GM12878 (cell line): ENCODE measurements at regions of chr6 and their contacts with region 1.

Region 1: DNA sequence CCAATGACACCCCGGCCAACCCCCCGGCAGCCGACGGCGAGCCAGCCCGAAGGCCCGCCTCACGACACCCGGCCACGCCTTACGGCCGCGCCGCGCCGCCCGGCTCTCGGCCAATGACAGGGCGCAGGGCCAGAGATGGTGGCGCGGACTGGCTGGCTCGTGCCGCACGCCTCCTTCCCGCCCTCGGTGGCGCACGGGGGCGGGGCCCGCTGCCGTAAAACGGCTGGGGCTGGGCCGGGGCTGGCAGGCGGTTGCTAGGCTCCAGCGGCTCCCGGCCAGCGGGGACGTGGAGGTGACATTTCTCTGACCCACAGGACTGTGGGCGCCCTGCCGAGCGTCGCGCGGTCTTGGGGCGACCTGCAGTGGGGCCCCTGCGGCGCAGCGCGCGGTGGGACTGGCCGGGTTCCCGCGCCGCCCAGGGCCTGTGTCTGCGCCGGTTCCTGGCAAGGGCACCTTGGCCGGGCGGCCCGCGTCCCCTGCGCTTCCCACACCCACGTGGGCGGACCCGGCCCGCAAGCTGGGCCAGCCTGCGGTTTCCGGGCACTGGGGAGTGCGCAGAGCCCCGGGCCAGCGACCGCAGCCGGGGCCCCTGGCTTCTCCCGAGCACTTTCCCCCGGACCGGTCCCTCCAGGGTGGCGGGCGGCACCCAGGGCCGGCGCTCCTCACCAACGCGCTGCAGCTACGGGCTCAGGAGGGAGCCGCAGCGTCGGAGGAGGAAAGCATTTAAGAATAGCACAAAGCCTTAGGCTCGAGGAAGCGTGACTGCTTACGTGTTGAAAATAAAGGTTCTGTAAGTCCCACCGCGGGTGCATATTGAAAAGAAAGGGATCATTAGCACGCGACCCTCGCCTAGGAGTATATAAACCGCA is at the start of gene MPC1:
- DNase-seq: peak; percentile 81
- ATAC-seq: peak; percentile 94
- H3K4me3 ChIP-seq: peak within 1 kb of the TSS; percentile 88
- H3K27ac ChIP-seq: peak within 1 kb of the TSS; percentile 81
- H3K4me1 ChIP-seq: peaks cover 5% of the 10 kb centered on the region
- H3K27me3 ChIP-seq: no peaks in the 10 kb centered on the region
- CTCF ChIP-seq: 0 out of 6 replicates have a peak, but pooled peaks of 1 of the 3 experiments have one; percentile 0
- EP300 ChIP-seq: no peak
- POLR2A ChIP-seq: peak; percentile 88
- RAD21 ChIP-seq: no peak
- polyA plus RNA-seq, gene MPC1: 81.5 to 97.0 TPM

Region 2: DNA sequence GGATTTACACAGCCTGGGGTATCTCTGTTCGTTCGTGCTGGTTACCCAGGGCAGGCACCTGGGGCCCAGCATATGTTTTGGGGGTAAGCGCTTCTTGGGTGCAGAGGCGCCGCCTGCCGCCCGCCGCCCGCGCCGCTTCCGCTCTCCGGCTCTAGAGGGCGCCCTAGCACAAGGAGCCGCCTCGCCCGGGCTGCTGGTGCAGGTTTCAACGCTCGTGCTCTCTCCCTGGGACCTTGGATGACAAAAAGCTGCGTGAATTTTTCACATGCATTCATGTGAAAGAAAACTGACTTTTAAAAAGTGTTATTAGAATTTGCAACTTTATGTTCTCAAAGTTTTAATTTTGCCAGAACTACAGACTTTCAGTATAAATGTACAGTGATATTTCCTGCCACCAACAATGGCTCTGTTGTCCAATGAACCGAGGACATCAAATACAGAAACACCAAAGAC is 107.4 kb before region 1 on chr6:
- CTCF ChIA-PET with region 1: interaction called, 39 read pairs
- POLR2A ChIA-PET with region 1: no interaction called
- RAD21 ChIA-PET with region 1: interaction called, 24 read pairs
- SMC1A ChIA-PET with region 1: interaction called, 17 read pairs
- in situ Hi-C with region 1: loop called (anchors 5 kb)
- intact Hi-C with region 1: loop called (anchors 1 kb)
- DNase-seq: no peak
- ATAC-seq: peak; percentile 93
- H3K4me3 ChIP-seq: no peak overlapping the region
- H3K27ac ChIP-seq: no peak overlapping the region
- H3K4me1 ChIP-seq: peaks cover 28% of the 10 kb centered on the region
- H3K27me3 ChIP-seq: no peaks in the 10 kb centered on the region; a peak in 1 of 4 replicates
- CTCF ChIP-seq: peak; percentile 99 to 100 (median 100); a peak in 5 of 6 replicates
- EP300 ChIP-seq: no peak
- POLR2A ChIP-seq: no peak
- RAD21 ChIP-seq: peak; percentile 99

Region 3: DNA sequence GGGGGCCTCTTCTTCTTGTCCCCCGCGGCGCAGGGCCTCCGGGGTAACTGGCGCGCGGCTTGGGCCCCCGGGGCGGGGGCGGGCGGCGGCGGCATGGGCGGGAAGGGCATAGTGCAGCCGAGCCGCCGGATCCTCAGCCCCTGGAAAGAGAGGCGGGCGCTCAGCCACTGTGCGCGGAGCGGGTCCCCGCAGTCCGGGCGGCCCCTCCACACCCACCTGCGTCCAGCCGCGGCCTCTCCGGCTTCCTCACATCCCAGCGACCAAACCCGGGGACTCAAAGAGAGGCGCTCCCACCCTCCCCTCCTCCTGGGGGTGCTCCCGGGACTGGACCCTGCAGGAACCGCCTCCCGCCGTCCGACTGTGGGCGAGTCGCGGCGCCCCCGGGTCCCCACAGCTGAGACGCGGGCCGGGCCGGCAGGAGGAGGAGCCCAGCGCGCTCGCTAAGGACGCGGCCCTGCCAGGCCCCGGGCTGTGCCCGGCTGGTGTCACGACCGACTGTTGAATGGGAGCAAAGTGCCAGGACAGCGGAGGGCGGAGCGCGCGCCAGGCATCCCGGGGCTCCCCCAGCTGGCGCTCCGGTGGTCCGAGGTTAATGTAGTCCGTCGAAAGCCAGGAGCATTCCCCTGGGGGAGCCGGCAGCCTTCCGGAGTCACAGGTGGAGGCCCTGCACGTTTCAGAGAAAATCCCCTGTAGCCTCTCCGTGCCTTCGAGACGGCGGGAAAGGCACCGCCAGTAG is 75.0 kb before region 1 on chr6 and contains the start of gene PRR18:
- CTCF ChIA-PET with region 1: interaction called, 211 read pairs
- POLR2A ChIA-PET with region 1: interaction called, 13 read pairs
- RAD21 ChIA-PET with region 1: interaction called, 73 read pairs
- SMC1A ChIA-PET with region 1: interaction called, 79 read pairs
- in situ Hi-C with region 1: no loop called
- intact Hi-C with region 1: loop called (anchors 1 kb)
- DNase-seq: peak; percentile 42
- ATAC-seq: peak; percentile 77
- H3K4me3 ChIP-seq: peak within 1 kb of the TSS; percentile 67
- H3K27ac ChIP-seq: peak within 1 kb of the TSS; percentile 48; the same call in 1 of the 2 replicates
- H3K4me1 ChIP-seq: no peaks in the 10 kb centered on the region
- H3K27me3 ChIP-seq: no peaks in the 10 kb centered on the region; a peak in 2 of 4 replicates
- CTCF ChIP-seq: no peak
- EP300 ChIP-seq: no peak
- POLR2A ChIP-seq: peak; percentile 52; the same call in 1 of the 2 replicates
- RAD21 ChIP-seq: no peak
- polyA plus RNA-seq, gene PRR18: 0.26 to 0.84 TPM

Region 4: GRCh38 chr6:166318649-166319600 is 64.2 kb before region 1 on chr6:
- CTCF ChIA-PET with region 1: interaction called, 211 read pairs
- POLR2A ChIA-PET with region 1: interaction called, 10 read pairs
- RAD21 ChIA-PET with region 1: interaction called, 73 read pairs
- SMC1A ChIA-PET with region 1: interaction called, 79 read pairs
- in situ Hi-C with region 1: no loop called
- intact Hi-C with region 1: no loop called
- DNase-seq: no peak
- ATAC-seq: peak; percentile 28
- H3K4me3 ChIP-seq: no peak overlapping the region
- H3K27ac ChIP-seq: no peak overlapping the region
- H3K4me1 ChIP-seq: no peaks in the 10 kb centered on the region
- H3K27me3 ChIP-seq: no peaks in the 10 kb centered on the region
- CTCF ChIP-seq: no peak
- EP300 ChIP-seq: no peak
- POLR2A ChIP-seq: peak; percentile 65
- RAD21 ChIP-seq: no peak

Region 5: GRCh38 chr6:166333172-166333995 is 49.8 kb before region 1 on chr6:
- CTCF ChIA-PET with region 1: interaction called, 45 read pairs
- POLR2A ChIA-PET with region 1: interaction called, 24 read pairs
- RAD21 ChIA-PET with region 1: interaction called, 33 read pairs
- SMC1A ChIA-PET with region 1: interaction called, 39 read pairs
- in situ Hi-C with region 1: loop called (anchors 5 kb)
- intact Hi-C with region 1: no loop called
- DNase-seq: peak; percentile 73
- ATAC-seq: peak; percentile 64
- H3K4me3 ChIP-seq: peak overlapping the region; percentile 34; the same call in 1 of the 2 replicates
- H3K27ac ChIP-seq: peak overlapping the region; percentile 93
- H3K4me1 ChIP-seq: peaks cover 43% of the 10 kb centered on the region
- H3K27me3 ChIP-seq: no peaks in the 10 kb centered on the region
- CTCF ChIP-seq: no peak
- EP300 ChIP-seq: peak; percentile 31 to 51; a peak in 2 of 4 replicates
- POLR2A ChIP-seq: peak; percentile 40; the same call in 1 of the 2 replicates
- RAD21 ChIP-seq: no peak

Region 6: DNA sequence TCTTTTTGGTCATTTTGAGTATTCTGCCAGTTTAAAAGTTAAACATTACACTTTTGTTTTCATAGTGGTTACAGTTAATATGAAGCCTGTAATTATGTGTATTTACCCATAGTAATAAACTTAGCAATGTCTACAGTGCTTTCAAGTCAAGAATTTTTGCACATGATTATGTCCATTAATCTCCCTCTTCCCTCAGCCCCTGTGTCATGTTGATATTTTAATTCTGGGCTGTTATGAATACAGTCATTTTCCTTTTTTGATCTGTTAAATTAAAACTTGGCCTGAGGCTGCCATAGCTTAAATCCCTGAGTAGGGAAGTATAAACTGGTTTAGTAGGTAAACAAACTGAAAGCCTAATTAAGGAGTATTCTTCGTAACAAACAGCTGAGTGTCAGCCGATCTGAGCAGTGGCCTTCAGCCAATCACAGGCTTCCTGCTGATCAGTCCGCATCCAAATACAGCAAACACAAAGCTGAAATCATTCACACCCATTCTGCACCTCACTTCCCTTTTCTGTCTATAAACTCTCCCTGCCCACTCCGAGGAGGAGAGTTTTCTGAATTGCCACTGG is 31.4 kb before region 1 on chr6:
- CTCF ChIA-PET with region 1: interaction called, 15 read pairs
- POLR2A ChIA-PET with region 1: interaction called, 12 read pairs
- RAD21 ChIA-PET with region 1: interaction called, 13 read pairs
- SMC1A ChIA-PET with region 1: interaction called, 17 read pairs
- in situ Hi-C with region 1: no loop called
- intact Hi-C with region 1: no loop called
- DNase-seq: peak; percentile 75
- ATAC-seq: peak; percentile 100
- H3K4me3 ChIP-seq: no peak overlapping the region
- H3K27ac ChIP-seq: no peak overlapping the region
- H3K4me1 ChIP-seq: peaks cover 4% of the 10 kb centered on the region
- H3K27me3 ChIP-seq: no peaks in the 10 kb centered on the region
- CTCF ChIP-seq: no peak
- EP300 ChIP-seq: 0 out of 4 replicates have a peak, but pooled peaks of 1 of the 2 experiments have one; percentile 29
- POLR2A ChIP-seq: no peak
- RAD21 ChIP-seq: no peak